ENCODE measurements at regions of chr9 and their contacts with region 1.

Region 1: GRCh38 chr9:113657703-113658544 is 194.4 kb downstream of the RGS3 start:
- DNase-seq: peak; percentile 85 to 87
- ATAC-seq: peak; percentile 89 to 96
- H3K4me3 ChIP-seq: no peak overlapping the region
- H3K27ac ChIP-seq: peak overlapping the region in 1 of 2 experiments; percentile 64; a peak in 3 of 6 replicates
- H3K4me1 ChIP-seq: peaks cover 8% of the 10 kb centered on the region
- CTCF ChIP-seq: peak; percentile 94
- EP300 ChIP-seq: no peak
- POLR2A ChIP-seq: no peak
- RAD21 ChIP-seq: peak; percentile 97

Region 2: DNA sequence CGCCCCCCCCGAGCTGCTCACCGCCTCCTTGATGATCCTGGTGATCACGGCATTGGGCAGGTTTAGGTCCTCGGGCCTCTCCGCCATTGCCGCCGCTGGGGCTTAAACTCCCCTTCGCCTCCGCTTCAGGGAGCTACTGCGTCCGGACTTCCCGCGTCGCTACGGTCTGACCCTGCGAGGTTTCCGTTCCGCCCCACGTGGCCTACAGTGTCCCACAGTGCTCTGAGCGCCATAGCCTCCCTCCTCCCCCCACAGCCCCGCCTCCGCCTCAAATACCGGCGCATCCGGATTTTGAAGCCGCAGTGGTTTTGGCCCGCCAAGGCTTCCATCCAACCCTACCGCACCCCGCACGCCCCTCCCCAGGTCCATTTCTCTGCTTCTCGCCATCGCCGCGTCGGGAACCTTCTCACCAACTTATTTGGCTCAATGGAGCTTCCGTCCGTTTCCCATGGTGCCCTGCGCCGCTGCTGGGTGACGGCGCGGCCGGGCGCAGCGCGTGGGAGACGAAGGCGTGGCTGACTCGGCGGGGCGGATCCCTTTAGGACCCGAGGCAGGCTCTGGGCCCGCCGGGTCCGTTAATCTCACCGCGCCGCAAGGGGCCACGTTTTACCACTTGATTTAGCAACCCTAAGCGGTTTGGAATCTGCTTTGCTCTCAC is 247.6 kb before region 1 on chr9 and contains the starts of genes C9orf43 and POLE3:
- CTCF ChIA-PET with region 1: interaction called, 12 read pairs
- POLR2A ChIA-PET with region 1: interaction called, 3 read pairs
- DNase-seq: peak; percentile 90 to 97
- ATAC-seq: peak; percentile 97
- H3K4me3 ChIP-seq: peak within 1 kb of the TSS; percentile 70
- H3K27ac ChIP-seq: peak within 1 kb of the TSS; percentile 95 to 98
- H3K4me1 ChIP-seq: peaks cover 8% of the 10 kb centered on the region; the same call in 1 of the 3 replicates
- CTCF ChIP-seq: no peak
- EP300 ChIP-seq: no peak
- POLR2A ChIP-seq: peak; percentile 72
- RAD21 ChIP-seq: no peak
- polyA plus RNA-seq, gene C9orf43: 0.89 and 1.0 TPM in 2 replicates
- polyA plus RNA-seq, gene POLE3: 129 and 143 TPM in 2 replicates

Region 3: DNA sequence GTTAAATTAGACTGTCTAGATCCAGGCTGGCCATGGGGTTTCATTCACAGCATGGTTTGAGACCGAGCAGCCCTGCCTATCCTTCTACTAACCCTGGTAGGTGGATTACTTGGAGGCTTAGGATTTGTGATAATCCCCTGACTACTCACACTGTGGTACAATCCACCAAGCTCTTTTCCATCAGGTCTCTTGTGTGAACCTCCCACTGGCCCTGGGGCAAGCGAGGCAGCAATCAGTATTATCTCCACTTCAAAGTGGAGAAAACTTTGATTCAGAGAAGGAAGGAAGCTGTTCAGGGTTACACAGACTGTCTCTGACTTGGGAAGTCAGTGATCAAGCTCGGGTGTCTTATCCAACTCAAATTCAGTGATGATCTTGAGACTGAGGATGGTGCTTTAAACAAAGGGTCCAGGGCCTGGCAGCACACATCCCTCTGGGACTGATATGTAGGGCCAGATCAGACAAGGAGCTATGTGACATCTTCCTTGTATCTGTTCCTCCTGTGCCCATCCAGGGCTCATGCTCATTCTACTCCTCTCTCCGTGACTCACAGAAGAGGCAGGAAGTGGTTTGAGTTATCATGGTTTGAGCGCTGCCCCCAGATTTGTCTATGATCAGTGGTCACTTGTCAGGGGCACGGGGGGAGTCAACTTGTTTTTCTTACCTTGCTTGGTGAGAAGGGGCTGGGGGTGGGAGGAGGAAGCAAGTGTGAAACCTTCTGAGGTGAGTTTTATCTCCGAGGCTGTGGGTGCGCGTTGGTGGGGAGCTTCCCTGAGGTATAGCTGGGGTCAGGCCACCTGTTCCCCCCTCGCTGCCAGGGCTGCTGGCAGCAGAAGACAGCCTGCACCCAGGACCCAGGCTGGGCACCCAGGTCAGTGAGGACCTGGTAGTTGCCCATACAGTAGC is 145.8 kb before region 1 on chr9:
- CTCF ChIA-PET with region 1: interaction called, 10 read pairs
- POLR2A ChIA-PET with region 1: no interaction called
- DNase-seq: no peak
- ATAC-seq: no peak
- H3K4me3 ChIP-seq: no peak overlapping the region
- H3K27ac ChIP-seq: no peak overlapping the region
- H3K4me1 ChIP-seq: peaks cover 19% of the 10 kb centered on the region; the same call in 2 of the 3 replicates
- CTCF ChIP-seq: no peak
- EP300 ChIP-seq: no peak
- POLR2A ChIP-seq: no peak
- RAD21 ChIP-seq: no peak

Region 4: GRCh38 chr9:113578882-113579282 is 79.0 kb before region 1 on chr9:
- CTCF ChIA-PET with region 1: interaction called, 1,349 read pairs
- POLR2A ChIA-PET with region 1: no interaction called
- DNase-seq: peak; percentile 65 to 78
- ATAC-seq: peak; percentile 75 to 80
- H3K4me3 ChIP-seq: no peak overlapping the region
- H3K27ac ChIP-seq: peak overlapping the region; percentile 36 to 82; a peak in 5 of 6 replicates
- H3K4me1 ChIP-seq: peaks cover 46% of the 10 kb centered on the region
- CTCF ChIP-seq: no peak
- EP300 ChIP-seq: no peak
- POLR2A ChIP-seq: no peak
- RAD21 ChIP-seq: no peak

Region 5: DNA sequence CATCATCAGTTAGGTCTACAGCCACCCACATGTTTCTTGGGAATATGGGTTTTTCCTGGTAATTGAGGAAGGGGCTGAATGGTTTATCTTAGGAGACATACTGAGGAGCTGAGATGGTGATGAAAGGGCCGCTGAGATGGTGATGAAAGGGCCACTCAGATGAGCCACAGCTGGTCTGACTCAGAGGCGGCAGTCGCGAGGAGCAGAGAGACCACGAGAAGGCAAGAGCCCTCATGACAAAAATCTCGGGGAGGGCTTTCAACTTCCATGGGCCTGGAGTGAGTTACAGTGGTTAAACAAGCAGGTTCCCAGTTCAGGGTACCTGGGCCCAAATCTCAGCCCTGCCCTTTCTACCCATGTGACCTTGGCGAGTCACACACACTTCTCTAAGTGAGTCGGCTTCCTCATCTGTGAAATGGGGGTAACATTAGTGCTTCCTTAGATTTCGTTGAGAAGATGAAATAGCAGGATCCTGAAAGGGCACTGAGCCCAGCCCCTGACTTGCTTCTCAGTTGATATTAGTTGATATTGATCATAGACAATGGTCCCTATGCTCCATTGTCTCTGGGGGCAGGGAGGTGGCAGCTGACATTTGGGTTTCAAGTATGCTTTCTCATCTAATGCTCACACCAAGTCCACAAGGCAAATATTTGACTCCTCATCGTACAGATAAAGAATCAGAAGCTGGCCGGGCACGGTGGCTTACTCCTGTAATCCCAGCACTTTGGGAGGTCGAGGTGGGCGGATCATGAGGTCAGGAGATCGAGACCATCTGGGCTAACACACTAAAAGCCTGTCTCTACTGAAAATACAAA is 24.9 kb before region 1 on chr9:
- CTCF ChIA-PET with region 1: interaction called, 120 read pairs
- POLR2A ChIA-PET with region 1: no interaction called
- DNase-seq: no peak
- ATAC-seq: no peak
- H3K4me3 ChIP-seq: no peak overlapping the region
- H3K27ac ChIP-seq: no peak overlapping the region
- H3K4me1 ChIP-seq: no peaks in the 10 kb centered on the region
- CTCF ChIP-seq: no peak
- EP300 ChIP-seq: no peak
- POLR2A ChIP-seq: no peak
- RAD21 ChIP-seq: no peak